Dorsolateral prefrontal cortex (tissue), 120 donors: ENCODE measurements at regions of chr7 and their contacts with region 1.

Region 1: GRCh38 chr7:341841-342638 is 52.1 kb downstream of the FOXL3 start:
- DNase-seq: peak in 9 of 10 donors; percentile 80 to 96 (median 90)
- H3K4me3 ChIP-seq: no peak overlapping the region
- H3K27ac ChIP-seq: peak overlapping the region in 29 of 59 donors; percentile 1 to 81 (median 54)
- H3K27me3 ChIP-seq: no peaks in the 10 kb centered on the region
- CTCF ChIP-seq: peak in 23 of 56 donors; percentile 13 to 45 (median 32)

Region 2: GRCh38 chr7:424961-425793 is 83.1 kb after region 1 on chr7:
- intact Hi-C with region 1: loop called in 1 of 2 experiments (anchors 5 kb)
- DNase-seq: peak; percentile 18 to 86 (median 69)
- H3K4me3 ChIP-seq: peak overlapping the region in 17 of 59 donors; percentile 0 to 53 (median 15)
- H3K27ac ChIP-seq: peak overlapping the region in 27 of 59 donors; percentile 6 to 64 (median 36)
- H3K27me3 ChIP-seq: peaks cover 0 to 2% (median 0%) of the 10 kb centered on the region in 45 donors
- CTCF ChIP-seq: peak in 1 of 56 donors; percentile 13

Region 3: GRCh38 chr7:496528-497295 is 154.7 kb after region 1 on chr7:
- intact Hi-C with region 1: loop called in 1 of 2 experiments (anchors 5 kb)
- DNase-seq: peak in 1 of 10 donors; percentile 38
- H3K4me3 ChIP-seq: no peak overlapping the region
- H3K27ac ChIP-seq: peak overlapping the region in 58 of 59 donors; percentile 4 to 99 (median 95)
- H3K27me3 ChIP-seq: no peaks in the 10 kb centered on the region
- CTCF ChIP-seq: no peak

Region 4: DNA sequence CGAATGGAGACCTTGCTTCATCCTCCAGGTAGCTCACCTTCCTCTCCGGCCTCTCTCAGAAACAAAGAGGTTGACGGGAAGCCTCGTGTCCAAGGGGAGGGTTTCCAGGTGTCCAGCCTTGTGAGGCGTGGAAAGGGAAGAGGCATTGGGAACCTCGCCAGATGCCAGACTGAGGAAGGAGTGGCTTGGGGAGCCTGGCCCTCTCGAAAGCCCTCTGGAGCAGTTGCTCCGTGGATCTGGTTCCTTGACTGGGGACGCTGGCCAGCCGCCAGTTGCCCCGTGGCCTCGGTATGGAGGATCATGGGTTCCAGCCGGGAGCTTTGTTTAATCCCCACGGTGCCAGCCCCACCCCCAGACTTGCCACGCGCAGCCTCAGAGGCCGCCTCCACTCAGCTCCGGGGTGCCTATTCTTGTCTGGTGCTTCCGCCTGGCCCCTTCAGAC is 459.9 kb after region 1 on chr7:
- intact Hi-C with region 1: no loop called
- DNase-seq: peak in 2 of 10 donors; percentile 26 to 54
- H3K4me3 ChIP-seq: peak overlapping the region in 53 of 59 donors; percentile 3 to 59 (median 35)
- H3K27ac ChIP-seq: peak overlapping the region in 10 of 59 donors; percentile 19 to 58 (median 44)
- H3K27me3 ChIP-seq: no peaks in the 10 kb centered on the region
- CTCF ChIP-seq: no peak